ENCODE measurements at regions of chr1 and their contacts with region 1.

Region 1: DNA sequence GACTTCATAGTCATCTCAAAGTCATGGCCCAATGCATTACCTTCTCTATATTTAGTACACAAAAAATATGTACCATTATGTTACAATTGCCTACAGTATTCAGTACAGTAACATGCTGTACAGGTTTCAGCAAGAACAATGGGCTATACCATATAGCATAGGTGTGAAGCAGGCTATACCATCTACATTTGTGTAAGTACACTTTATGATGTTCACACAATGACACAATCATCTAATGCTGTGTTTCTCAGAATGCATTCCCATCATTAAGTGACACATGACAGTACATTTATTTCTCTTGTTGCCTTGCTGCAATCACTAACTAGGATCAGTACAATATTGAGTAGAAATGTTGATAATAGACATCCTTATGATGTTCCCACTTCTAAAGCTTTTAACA is 46.5 kb upstream of the NFIA start:
- DNase-seq: no peak
- H3K4me3 ChIP-seq: no peak overlapping the region
- H3K27ac ChIP-seq: no peak overlapping the region
- H3K4me1 ChIP-seq: no peaks in the 10 kb centered on the region
- H3K27me3 ChIP-seq: no peaks in the 10 kb centered on the region

Region 2: GRCh38 chr1:60705026-60705425 is 330.9 kb before region 1 on chr1:
- in situ Hi-C with region 1: no loop called
- DNase-seq: no peak
- H3K4me3 ChIP-seq: no peak overlapping the region
- H3K27ac ChIP-seq: no peak overlapping the region
- H3K4me1 ChIP-seq: no peaks in the 10 kb centered on the region
- H3K27me3 ChIP-seq: no peaks in the 10 kb centered on the region

Region 3: DNA sequence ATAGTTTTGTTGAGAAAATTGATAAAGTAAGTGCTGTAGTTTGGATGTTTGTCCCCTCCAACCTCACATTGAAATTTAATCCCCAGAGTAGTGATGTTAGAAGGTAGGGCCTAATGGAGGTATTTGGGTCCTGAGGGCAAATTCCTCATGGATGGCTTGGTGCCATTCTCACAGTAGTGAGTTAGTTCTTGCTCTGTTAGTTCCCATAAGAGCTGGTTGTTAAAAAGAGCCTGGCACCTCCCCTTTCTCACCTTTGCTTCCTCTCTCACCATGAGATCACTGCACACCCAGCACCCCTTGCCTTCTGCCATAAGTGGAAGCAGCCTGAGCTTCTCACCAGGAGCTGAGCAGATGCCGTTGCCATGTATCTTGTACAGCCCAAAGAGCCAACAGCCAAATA is 308.3 kb before region 1 on chr1:
- in situ Hi-C with region 1: no loop called
- DNase-seq: no peak
- H3K4me3 ChIP-seq: no peak overlapping the region
- H3K27ac ChIP-seq: no peak overlapping the region
- H3K4me1 ChIP-seq: no peaks in the 10 kb centered on the region
- H3K27me3 ChIP-seq: no peaks in the 10 kb centered on the region

Region 4: DNA sequence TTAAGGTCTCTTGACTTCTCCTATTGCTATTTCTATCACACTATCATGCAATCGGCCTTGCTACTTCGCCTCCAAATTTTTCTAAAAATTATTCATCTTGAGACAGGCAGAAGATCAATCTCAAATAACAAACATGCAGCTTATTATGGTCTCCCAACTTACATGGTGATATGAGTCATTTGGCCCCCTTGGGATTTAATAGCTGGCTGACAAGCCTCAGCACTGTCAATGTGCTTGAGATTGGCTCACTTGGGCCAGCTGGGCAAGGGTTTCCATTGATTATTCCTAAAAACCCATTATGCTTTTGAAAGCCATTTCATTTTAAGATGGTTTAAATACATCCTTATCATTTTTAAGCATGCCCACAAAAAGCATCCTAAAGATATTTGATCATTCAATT is 178.0 kb before region 1 on chr1:
- in situ Hi-C with region 1: loop called (anchors 10 kb)
- DNase-seq: no peak
- H3K4me3 ChIP-seq: no peak overlapping the region
- H3K27ac ChIP-seq: no peak overlapping the region
- H3K4me1 ChIP-seq: no peaks in the 10 kb centered on the region
- H3K27me3 ChIP-seq: peaks cover 12% of the 10 kb centered on the region; the same call in 1 of the 2 replicates

Region 5: DNA sequence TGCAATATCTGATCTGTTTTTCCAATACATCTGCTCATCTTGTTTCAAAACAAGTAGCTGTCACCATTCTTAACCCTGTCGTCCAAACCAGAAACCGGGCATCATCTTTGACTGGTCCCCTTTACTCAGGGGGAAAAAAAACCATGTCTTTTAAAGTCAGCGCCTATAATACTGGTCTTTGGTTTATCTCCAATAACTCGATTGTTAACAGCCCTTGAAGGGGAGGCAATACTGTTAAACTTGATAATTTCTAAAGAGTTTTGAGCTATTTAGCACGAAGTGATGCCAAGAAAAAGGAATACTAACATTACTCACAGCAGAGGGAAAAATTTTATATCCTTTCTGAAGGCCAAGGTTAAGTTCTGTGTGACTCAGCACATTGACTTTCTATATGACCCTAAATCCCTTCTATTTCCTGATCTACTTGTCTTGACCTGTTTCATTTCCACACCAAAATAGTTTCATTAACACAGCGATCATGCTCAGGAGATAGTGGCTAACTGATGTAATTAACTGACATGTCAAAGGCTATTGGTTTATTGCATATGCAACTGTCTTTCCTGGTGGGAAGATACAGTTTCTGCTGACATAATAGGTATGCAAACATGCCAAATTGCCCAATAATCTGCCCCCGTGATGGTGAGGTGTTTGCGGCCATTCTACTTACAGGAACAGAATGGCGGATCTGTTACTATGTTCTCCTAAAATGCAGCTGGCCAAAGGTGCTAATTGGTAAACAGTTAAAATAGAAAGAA is 105.6 kb after region 1 on chr1:
- in situ Hi-C with region 1: no loop called
- DNase-seq: peak; percentile 78
- H3K4me3 ChIP-seq: peak overlapping the region; percentile 44; the same call in 1 of the 2 replicates
- H3K27ac ChIP-seq: peak overlapping the region; percentile 44
- H3K4me1 ChIP-seq: peaks cover 49% of the 10 kb centered on the region
- H3K27me3 ChIP-seq: no peaks in the 10 kb centered on the region

Region 6: DNA sequence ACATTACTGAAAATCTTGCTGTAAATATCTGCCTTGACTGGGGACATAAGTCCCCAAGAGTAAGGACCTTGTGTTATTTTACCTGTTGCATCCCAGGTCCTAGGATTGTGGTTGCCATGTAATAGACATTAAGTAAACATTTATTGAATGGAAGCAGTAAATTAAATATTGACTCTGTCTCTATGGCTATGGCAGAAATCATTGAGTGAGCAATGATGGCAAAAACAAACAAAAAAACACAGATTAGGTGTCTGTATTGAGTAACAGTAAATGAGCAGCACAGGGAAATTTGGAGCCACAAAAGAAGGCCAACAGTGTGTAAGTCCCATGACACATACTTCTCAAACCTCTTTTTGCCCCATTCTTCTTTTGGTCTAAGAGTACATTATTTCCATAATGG is 286.9 kb after region 1 on chr1:
- in situ Hi-C with region 1: no loop called
- DNase-seq: peak; percentile 5
- H3K4me3 ChIP-seq: no peak overlapping the region
- H3K27ac ChIP-seq: no peak overlapping the region
- H3K4me1 ChIP-seq: peaks cover 16% of the 10 kb centered on the region
- H3K27me3 ChIP-seq: no peaks in the 10 kb centered on the region

Measured in GM23248 (cell line).